ENCODE measurements at regions of chr12 and their contacts with region 1.

Region 1: GRCh38 chr12:121823101-121823726 is 19.4 kb downstream of the SETD1B start:
- DNase-seq: no peak
- H3K4me3 ChIP-seq: no peak overlapping the region
- H3K27ac ChIP-seq: no peak overlapping the region
- H3K4me1 ChIP-seq: no peaks in the 10 kb centered on the region
- H3K27me3 ChIP-seq: no peaks in the 10 kb centered on the region
- CTCF ChIP-seq: peak; percentile 28 to 54 (median 37); a peak in 3 of 4 replicates
- EP300 ChIP-seq: no peak
- POLR2A ChIP-seq: no peak
- RAD21 ChIP-seq: peak; percentile 36 to 45; a peak in 3 of 4 replicates

Region 2: DNA sequence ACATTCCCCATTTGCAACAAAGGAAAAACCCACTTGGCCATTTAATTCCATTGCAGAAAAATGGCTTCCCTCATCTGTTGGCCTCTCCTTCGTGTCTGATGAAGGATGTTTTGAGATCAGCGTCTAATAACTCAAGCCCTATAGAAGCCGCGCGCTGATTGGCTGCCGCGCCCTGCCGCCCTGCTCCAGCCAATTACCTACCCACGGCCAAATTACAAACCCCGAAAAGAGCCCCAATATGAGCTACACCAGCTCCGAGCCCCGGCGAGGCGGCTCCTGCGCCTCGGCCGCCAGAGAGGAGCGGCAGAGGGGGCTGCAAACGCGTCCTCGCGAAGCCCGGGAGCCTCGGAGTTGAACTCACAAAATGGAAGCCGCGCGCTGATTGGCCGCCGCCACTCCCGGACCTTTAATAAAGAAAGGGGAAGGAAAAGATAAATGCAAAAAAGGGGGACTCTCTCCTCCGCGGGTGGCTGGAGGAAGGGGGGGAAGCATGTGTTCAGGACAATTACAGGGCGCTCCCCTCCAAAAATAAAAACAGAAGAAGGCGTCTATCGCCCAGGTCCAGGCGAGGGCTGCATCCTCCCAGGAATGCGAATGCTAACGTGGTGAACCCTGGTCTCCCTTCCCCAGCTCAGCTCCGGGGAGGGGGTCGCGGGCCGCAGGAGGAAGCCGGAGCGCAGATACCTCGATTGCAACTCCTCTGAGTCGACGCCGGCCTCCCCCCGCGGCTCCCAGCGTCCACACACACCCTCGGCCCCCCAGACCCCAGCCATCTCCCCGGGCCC is 20.2 kb before region 1 on chr12:
- CTCF ChIA-PET with region 1: interaction called, 163 read pairs
- POLR2A ChIA-PET with region 1: interaction called, 50 read pairs
- DNase-seq: peak; percentile 70 to 88
- H3K4me3 ChIP-seq: peak overlapping the region; percentile 70 to 88 (median 81)
- H3K27ac ChIP-seq: peak overlapping the region; percentile 97
- H3K4me1 ChIP-seq: peaks cover 12 to 28% (median 21%) of the 10 kb centered on the region in 4 experiments
- H3K27me3 ChIP-seq: no peaks in the 10 kb centered on the region
- CTCF ChIP-seq: no peak
- EP300 ChIP-seq: no peak
- POLR2A ChIP-seq: peak in 1 of 2 experiments; percentile 97; a peak in 2 of 3 replicates
- RAD21 ChIP-seq: no peak

Region 3: DNA sequence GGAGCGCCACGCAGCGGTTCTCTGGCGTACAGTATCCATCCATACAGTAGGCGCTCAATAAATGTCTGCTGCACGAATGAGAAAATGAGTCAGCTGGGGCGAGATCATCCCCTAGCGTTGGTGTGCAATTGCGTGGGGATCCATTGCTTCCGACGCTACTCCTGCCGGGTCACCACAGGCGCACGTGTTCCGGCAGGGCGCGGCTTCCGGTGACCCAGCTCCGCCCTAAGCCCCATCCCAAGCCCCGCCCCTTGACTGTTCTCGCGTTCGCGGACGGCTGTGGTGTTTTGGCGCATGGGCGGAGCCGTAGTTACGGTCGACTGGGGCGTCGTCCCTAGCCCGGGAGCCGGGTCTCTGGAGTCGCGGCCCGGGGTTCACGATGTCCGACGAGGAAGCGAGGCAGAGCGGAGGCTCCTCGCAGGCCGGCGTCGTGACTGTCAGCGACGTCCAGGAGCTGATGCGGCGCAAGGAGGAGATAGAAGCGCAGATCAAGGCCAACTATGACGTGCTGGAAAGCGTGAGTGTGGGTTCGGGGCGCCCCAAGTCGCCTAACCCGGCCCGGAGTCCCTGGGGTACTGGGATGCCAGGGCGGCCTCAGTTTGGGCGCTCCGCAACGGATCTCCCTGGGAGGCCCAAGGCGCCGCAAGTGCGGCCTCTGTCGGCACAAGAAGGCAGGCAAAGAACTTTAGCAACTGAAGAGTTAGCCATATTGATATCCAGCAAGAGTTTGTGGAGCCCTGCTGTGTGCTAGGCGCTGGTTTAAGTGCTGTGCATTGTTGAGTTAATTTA is 65.5 kb after region 1 on chr12 and contains the start of gene PSMD9:
- CTCF ChIA-PET with region 1: interaction called, 10 read pairs
- POLR2A ChIA-PET with region 1: interaction called, 4 read pairs
- DNase-seq: peak; percentile 94 to 99
- H3K4me3 ChIP-seq: peak within 1 kb of the TSS; percentile 64 to 79 (median 74)
- H3K27ac ChIP-seq: peak within 1 kb of the TSS; percentile 83; the same call in 1 of the 2 replicates
- H3K4me1 ChIP-seq: peaks cover 0 to 5% (median 1%) of the 10 kb centered on the region in 4 experiments; a peak in 4 of 7 replicates
- H3K27me3 ChIP-seq: peaks cover 0 to 2% (median 1%) of the 10 kb centered on the region in 4 experiments; a peak in 3 of 7 replicates
- CTCF ChIP-seq: peak; percentile 59 to 83 (median 75)
- EP300 ChIP-seq: peak in 1 of 2 experiments; percentile 86; a peak in 1 of 3 replicates
- POLR2A ChIP-seq: peak in 1 of 2 experiments; percentile 75; a peak in 2 of 3 replicates
- RAD21 ChIP-seq: peak; percentile 52 to 68
- total RNA-seq, gene PSMD9: 28.8 and 33.1 TPM in 2 replicates